Dendritic cell treated with granulocyte-macrophage colony-stimulating factor and Interleukin-4, amounts not matched to agents 40 ng/mL and 50 ng/mL, for 4 days (primary cell): ENCODE measurements at regions of chr2 and their contacts with region 1.

Region 1: DNA sequence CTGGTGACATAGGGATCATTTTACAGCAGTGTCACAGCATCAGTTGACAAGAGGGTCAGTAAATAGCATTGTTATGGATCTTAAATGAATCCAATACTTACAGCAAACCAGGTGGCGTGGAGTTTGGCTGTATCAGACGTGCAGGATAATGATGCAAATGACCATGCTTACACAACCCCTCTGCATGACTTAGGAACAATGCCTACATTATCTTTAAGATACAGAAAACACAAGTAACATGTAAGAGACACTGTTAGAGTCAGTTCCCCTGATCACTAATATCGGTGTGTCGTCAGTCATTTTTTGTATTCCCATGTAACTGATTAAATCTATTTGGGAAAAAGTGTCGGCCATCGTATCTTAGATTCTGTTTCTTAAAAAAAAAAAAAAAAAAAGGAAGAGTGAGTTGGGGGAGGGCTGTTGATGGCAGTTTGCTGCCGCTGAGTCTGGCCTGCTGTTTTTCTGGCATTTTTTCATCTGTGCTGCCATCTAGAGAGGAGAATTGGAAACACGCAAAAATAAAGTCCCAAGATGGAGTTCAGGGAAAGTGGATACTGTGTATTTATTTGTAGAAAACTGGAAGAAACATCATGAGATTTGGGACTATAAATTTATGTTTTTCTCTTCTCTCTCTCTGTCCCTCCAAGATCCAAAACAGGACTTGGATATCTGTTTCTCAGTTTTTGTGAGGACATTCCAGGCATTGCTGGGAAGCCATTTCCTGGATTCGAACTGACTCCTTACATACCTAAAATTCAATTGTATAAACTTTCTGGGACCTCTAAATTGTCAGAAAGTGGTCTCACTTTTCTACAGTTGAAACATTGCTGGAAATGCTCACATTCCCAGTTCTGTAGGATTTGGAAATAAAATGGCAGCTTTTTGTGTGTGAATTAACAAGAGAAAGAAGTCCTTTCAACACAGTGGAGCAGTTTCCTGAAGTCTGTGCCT is 60.3 kb upstream of the AGPS start:
- H3K4me3 Mint-ChIP-seq: no peak overlapping the region
- H3K27ac Mint-ChIP-seq: peak overlapping the region; percentile 32
- H3K4me1 Mint-ChIP-seq: peaks cover 30% of the 10 kb centered on the region
- H3K27me3 Mint-ChIP-seq: no peaks in the 10 kb centered on the region

Region 2: DNA sequence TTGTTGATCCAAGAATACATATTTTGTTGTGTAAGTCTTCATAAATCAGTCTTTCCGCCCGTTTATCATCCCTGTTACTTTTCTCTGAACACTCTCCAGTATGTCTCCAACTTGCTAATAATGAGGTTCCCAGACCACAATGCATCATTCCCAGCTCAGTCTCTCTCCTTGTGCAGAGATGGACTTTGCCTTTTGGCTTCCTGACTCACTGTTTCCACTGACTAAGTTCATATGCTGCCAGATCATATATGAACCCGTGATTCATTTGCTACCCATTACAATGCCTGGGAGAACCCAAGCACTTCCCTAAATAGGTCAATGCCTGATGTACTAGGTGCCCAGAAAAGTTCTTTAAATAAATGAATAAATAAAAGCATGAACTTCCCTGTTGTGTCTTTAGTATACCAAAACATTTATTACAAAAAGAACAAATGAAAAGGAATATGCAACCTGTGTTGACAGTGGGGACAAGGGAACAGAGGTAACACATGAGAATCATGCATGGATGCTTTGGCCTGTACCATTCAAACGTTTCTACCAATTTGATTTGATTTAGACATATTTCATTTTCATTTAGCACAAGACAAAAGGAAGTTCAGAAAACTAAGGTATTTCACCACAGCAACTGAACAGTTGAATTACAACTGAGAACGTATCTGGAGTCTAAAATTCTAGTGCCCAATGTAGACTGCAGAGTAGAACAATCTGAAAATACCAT is 335.1 kb before region 1 on chr2:
- intact Hi-C with region 1: loop called (anchors 10 kb)
- H3K4me3 Mint-ChIP-seq: no peak overlapping the region
- H3K27ac Mint-ChIP-seq: peak overlapping the region; percentile 66
- H3K4me1 Mint-ChIP-seq: peaks cover 42% of the 10 kb centered on the region
- H3K27me3 Mint-ChIP-seq: no peaks in the 10 kb centered on the region

Region 3: GRCh38 chr2:177296040-177296439 is 36.3 kb before region 1 on chr2:
- intact Hi-C with region 1: loop called (anchors 5 kb)
- H3K4me3 Mint-ChIP-seq: no peak overlapping the region
- H3K27ac Mint-ChIP-seq: no peak overlapping the region
- H3K4me1 Mint-ChIP-seq: peaks cover under 1% of the 10 kb centered on the region
- H3K27me3 Mint-ChIP-seq: no peaks in the 10 kb centered on the region

Region 4: DNA sequence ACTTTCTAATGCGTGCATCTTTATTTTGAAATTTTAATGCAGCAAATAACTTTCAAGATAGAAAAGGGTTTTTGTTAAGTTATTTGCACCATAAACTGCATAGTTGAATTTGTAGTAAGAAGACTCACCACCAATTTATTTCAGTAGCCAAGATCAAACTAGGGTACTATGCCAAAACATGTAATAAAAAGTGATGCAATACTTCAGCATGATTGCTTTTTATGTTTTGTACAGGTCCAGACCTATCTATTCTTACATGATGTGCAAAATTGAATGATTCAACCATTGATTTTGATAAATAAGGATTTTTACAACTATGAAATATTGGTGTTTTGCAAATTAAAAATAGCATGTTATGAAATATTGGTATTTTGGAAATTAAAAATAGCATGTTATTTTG is 87.0 kb after region 1 on chr2:
- intact Hi-C with region 1: loop called (anchors 1 kb)
- H3K4me3 Mint-ChIP-seq: no peak overlapping the region
- H3K27ac Mint-ChIP-seq: no peak overlapping the region
- H3K4me1 Mint-ChIP-seq: no peaks in the 10 kb centered on the region
- H3K27me3 Mint-ChIP-seq: no peaks in the 10 kb centered on the region

Region 5: DNA sequence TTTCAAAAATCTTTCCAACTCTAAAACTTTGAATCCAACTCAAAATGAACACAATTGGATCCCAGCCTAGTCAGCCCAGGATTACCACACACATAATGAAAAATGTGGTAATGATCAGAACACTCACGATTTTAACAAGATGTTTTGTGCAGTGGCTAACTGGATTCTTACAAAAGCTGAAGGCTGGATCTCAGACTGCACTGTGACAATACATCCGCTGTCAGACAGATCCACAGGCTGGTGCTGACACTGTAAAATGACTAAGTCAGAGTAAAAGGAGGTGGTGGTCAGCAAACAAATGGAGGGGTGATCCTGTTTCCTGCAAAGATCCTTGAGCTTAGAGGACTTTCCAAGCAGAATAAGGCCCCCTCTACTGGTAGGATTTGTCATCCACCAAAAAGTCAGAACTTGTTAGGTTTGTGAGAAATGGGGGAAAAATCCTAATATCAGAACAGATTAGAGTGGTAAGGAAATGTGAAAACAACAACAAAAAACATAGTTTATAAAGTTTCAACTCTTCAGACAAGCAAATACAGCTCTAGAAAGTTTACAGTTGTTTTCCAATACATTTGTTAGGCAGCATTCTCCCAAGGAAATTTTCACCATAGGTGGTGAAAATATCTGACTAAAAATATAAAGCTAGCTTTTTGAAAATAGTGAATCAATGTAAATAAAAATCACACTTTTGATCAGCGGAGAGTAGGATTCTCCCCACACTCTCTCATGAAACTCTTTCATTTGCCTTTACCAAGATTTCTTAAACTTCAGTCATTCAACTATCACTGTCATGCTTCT is 272.2 kb after region 1 on chr2:
- intact Hi-C with region 1: loop called (anchors 1 kb)
- H3K4me3 Mint-ChIP-seq: no peak overlapping the region
- H3K27ac Mint-ChIP-seq: no peak overlapping the region
- H3K4me1 Mint-ChIP-seq: no peaks in the 10 kb centered on the region
- H3K27me3 Mint-ChIP-seq: no peaks in the 10 kb centered on the region

Region 6: DNA sequence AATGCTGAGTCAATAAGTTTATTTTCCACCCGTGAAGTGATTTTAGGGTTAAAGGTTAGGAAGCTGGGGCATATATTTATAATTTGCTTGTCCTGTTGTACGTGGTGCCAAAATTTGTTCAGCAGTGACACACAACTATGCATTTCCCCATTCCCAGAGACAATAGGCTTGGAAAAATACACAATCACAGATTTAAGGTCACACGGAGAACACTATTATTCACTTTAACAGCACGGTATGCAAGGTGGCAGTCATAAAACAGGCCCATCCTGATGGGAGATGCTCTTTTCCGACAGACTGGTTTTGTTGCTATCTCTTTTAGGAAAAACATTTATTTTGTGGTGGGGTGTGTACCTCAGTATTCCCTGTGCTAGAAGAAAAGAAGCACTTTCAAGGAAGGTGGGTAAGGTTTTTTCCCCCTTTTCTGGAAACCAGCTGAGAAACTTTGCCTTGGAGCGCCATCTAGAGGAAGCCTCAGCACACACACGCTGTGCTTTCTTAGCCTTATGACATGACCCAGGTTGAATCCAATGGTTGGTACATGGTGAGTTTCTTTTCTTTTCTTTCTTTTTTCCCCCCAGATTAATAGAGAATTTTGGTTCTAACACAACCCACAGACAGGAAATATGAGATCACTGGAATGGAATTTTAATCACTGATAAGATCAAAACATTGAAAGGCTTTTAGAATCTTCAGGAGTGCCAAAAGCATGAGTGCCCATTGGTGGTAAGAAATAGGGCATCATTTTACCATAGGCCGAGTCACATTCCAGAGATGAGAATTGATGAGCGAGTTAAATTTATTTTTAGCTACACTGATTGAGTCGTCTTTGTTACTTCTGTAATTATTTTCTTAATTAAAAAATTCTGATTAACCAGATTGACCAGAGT is 392.3 kb after region 1 on chr2:
- intact Hi-C with region 1: loop called (anchors 10 kb)
- H3K4me3 Mint-ChIP-seq: no peak overlapping the region
- H3K27ac Mint-ChIP-seq: no peak overlapping the region
- H3K4me1 Mint-ChIP-seq: no peaks in the 10 kb centered on the region
- H3K27me3 Mint-ChIP-seq: peaks cover 2% of the 10 kb centered on the region

Region 7: DNA sequence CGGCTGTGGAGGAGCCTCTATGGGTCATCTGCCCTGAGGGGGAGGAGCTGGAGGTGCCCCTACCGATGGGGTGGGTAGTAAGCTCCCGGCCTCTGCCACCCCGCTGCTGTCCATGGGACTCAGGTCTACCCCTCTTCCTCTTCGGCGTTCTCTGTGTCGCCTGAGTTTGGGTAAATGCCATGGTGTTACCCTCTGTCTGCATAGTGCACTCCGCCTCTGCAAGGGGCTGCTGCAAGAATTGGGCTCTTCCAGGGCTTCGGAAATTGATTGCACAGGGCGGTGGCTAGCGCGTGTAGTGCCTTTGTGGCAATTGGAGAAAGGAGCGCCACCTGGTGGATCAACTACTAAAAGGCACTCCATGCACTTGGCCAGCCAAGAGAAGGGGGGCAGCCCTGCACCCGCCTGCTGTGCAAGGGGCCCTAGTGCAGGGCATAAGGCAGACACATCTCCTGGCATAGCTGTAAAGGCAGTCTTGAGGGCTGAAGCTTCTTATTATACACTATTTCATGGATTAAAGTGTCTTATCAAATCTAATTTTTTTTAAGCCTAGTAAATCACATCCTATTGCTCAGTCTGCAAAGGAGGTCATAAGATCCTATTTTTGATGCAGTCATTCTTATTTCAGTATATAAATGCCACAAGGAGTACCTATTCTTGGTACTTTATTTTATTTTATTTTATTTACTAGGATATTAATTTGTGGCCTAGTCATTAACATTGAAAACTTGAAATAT is 431.4 kb after region 1 on chr2:
- intact Hi-C with region 1: loop called (anchors 5 kb)
- H3K4me3 Mint-ChIP-seq: peak overlapping the region; percentile 27
- H3K27ac Mint-ChIP-seq: no peak overlapping the region
- H3K4me1 Mint-ChIP-seq: peaks cover 6% of the 10 kb centered on the region
- H3K27me3 Mint-ChIP-seq: peaks cover 12% of the 10 kb centered on the region